Left ventricle myocardium inferior (tissue), 1 donor: ENCODE measurements at regions of chr4 and their contacts with region 1.

Region 1: DNA sequence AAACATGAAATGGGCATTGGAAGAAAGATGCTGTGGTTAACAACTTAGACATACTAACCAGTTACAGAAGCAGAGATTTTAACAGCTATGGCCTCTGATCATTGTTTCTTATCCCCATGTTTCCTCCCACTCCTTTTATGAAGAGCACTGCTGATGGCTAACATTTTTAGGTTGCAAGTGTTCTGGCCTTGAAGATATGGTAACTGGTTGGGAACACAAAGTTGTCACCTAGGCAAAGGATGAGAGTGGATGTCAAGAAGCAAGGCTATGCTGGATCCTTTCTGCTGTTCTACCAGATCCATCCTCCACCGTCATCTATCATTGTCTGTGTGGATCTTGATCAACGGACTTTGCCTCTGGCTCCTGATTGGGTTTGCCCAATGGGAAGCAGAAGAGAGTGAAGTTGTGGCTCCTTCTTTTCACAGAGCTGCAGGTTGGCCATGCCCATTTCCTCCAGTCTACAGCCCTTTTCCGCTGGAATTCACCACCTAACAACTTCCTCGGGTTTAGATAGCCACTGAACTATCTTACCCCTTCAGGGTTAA is 48.9 kb upstream of the SPP1 start:
- DNase-seq: no peak
- H3K4me3 ChIP-seq: no peak overlapping the region
- H3K27ac ChIP-seq: no peak overlapping the region
- H3K4me1 ChIP-seq: no peaks in the 10 kb centered on the region
- H3K27me3 ChIP-seq: no peaks in the 10 kb centered on the region
- CTCF ChIP-seq: no peak

Region 2: GRCh38 chr4:87938746-87939145 is 12.1 kb after region 1 on chr4:
- intact Hi-C with region 1: loop called (anchors 1 kb)
- DNase-seq: no peak
- H3K4me3 ChIP-seq: no peak overlapping the region
- H3K27ac ChIP-seq: no peak overlapping the region
- H3K4me1 ChIP-seq: no peaks in the 10 kb centered on the region
- H3K27me3 ChIP-seq: no peaks in the 10 kb centered on the region
- CTCF ChIP-seq: no peak